ENCODE measurements at regions of chr3 and their contacts with region 1.

Region 1: DNA sequence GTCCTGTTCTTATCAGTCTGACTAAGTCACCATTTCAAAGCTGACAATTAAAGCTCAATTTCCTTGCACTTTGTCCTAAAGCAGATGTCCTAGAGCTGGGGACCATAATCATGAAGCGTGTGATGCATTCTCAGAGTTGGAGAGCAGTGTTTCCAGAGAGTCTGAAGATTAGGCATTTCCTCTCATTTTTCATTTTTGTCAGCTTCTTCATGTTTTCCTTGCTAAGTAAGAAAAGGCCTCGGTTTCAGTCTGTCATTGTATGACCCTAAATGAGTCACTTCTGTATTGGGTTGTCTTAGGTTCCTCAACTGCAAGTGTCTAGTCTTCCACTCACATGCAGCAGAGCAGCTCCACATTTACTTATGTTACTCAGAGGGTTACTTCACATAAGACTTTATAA is 257.2 kb upstream of the TPRG1 start:
- DNase-seq: no peak
- H3K4me3 Mint-ChIP-seq: no peak overlapping the region
- H3K27ac Mint-ChIP-seq: peak overlapping the region; percentile 83
- H3K4me1 Mint-ChIP-seq: peaks cover 42% of the 10 kb centered on the region
- H3K27me3 Mint-ChIP-seq: peaks cover 3% of the 10 kb centered on the region

Region 2: DNA sequence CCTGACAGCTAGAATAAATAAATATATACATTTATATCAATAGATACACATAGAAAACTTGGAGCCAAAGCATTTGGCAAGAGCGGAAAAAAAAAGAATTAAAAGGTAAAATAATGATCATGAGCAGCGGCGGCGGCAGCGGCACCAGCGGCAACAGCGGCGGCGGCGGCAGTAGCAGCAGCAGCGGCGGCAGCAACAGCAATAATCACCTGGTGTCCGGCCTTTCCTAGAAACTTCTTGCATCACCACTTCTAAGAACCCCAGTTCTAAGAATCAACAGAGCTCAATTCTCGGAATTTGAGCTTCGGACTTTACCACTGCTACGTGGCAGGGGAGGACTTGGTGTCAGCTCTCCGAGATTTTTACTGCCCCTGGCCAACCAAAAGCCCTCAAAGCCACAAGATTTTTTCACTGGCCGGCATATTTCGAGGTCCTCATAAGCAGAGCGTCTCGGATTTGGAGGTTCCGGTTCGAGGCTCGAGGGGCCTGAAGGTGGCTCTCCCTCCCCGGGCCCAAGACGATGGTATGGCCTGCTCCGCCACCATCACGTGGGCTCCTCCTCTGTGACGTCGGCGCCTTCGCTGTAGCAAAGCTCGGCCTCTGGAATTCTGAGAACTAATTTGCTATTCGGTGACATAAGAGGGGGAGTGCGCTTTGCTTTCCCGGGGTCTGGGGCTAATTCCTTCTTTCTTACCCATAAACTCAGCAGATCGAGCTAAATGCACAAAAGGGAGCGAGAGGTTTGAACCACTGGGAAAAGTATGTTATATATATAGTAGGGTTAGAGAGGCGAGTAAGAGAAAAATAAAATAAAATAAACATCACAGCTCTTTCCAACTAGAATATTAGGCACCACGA is 1169.1 kb before region 1 on chr3 and contains the start of gene BCL6:
- intact Hi-C with region 1: loop called (anchors 1 kb)
- DNase-seq: peak; percentile 90
- H3K4me3 Mint-ChIP-seq: peak within 1 kb of the TSS; percentile 94
- H3K27ac Mint-ChIP-seq: peak within 1 kb of the TSS; percentile 99
- H3K4me1 Mint-ChIP-seq: peaks cover 55% of the 10 kb centered on the region
- H3K27me3 Mint-ChIP-seq: no peaks in the 10 kb centered on the region
- total RNA-seq, gene BCL6: 12.0 and 16.5 TPM in 2 replicates

Region 3: GRCh38 chr3:188294823-188295487 is 619.6 kb before region 1 on chr3:
- intact Hi-C with region 1: loop called (anchors 5 kb)
- DNase-seq: no peak
- H3K4me3 Mint-ChIP-seq: no peak overlapping the region
- H3K27ac Mint-ChIP-seq: no peak overlapping the region
- H3K4me1 Mint-ChIP-seq: peaks cover 66% of the 10 kb centered on the region
- H3K27me3 Mint-ChIP-seq: no peaks in the 10 kb centered on the region

Region 4: DNA sequence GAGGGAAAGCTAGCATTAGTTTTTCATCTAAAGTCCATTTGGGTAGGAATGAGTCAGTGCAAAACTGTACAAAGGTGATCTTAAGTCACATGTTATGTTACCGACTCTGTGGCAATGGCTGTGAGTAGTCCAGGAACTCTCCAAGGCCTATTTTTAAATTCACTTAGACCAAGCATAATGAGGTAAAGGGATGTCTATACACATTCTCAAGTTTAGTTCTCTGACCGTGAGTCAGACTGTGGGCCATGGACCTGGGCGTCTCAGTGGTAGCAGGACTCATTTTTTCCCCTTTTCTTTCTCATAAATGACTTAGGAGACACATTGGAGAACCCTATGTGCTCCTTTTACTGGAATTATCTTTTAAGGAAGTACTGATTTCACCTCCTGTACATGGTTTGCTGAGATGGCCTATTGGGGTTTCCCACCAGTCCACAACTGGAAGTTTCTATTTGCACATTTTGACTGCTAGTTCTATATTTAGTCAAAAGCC is 231.5 kb before region 1 on chr3:
- intact Hi-C with region 1: loop called (anchors 2 kb)
- DNase-seq: no peak
- H3K4me3 Mint-ChIP-seq: no peak overlapping the region
- H3K27ac Mint-ChIP-seq: peak overlapping the region; percentile 78
- H3K4me1 Mint-ChIP-seq: peaks cover 41% of the 10 kb centered on the region
- H3K27me3 Mint-ChIP-seq: no peaks in the 10 kb centered on the region

Region 5: DNA sequence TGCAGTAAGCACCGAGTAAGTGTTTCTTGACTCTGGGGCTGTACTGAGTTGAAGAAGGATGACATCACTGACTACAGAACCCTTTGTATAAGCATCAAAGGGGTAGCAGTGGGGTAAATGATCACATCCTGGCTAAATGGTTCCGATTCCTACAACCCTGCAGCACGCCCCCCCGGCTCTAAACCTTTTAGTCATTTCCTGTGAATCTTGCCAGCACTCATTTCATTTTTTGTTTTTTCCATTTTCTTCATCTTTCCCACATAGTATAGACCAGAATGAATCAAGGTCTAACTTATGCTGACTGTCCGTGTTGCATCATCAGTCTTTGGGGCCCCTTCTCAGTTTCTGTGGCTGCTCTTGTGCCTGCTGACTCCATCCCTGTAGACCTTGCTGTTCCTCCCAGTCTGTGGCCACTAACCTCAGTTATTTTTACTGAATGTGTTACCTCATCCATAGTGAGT is 125.9 kb before region 1 on chr3:
- intact Hi-C with region 1: loop called (anchors 1 kb)
- DNase-seq: peak; percentile 42
- H3K4me3 Mint-ChIP-seq: no peak overlapping the region
- H3K27ac Mint-ChIP-seq: no peak overlapping the region
- H3K4me1 Mint-ChIP-seq: peaks cover 2% of the 10 kb centered on the region
- H3K27me3 Mint-ChIP-seq: no peaks in the 10 kb centered on the region

Region 6: DNA sequence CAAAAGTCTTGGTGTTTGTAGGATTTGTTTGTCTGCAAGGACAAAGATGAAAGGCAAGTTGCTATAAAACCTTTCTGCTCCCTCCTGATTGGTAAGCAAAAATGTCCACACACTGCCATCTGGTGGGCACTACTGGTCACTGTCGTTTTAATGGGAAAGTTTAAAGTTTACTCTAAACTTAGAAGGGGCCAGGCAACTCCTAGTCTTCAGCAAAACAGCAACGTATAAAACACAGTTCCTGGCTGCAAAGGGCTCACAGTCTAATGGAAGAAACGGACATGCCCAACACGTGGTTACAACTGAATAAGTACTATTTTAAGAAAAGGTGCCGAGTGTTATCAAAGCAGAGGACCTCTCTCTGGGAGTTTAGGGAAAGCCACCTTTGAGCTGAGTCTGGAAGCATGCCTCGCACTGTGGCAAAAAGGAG is 233.5 kb after region 1 on chr3:
- intact Hi-C with region 1: loop called (anchors 5 kb)
- DNase-seq: peak; percentile 52
- H3K4me3 Mint-ChIP-seq: no peak overlapping the region
- H3K27ac Mint-ChIP-seq: no peak overlapping the region
- H3K4me1 Mint-ChIP-seq: peaks cover 41% of the 10 kb centered on the region
- H3K27me3 Mint-ChIP-seq: peaks cover 7% of the 10 kb centered on the region